Naive thymus-derived CD4-positive, alpha-beta T cell (primary cell): ENCODE measurements at regions of chr6 and their contacts with region 1.

Region 1: DNA sequence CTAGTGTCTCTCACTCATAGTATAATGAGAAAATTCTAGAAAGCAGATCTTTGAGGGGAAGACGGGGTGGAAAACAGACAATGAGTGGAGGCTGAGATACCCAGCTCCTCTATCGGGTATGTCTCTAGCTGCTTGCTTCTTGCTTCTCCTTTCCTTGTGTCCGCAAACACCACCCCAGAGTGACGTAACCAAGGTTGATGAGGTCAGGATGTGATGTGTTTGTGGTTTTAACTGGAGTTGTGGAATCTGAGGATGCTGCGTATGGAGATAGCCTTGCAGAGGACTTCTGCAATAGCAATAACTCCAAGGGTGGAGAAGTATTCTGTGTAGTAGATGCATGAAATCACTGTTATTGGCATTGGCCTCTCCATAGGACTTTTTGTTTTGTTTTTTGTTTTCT is 132.7 kb upstream of the IFNGR1 start:
- DNase-seq: no peak
- ATAC-seq: peak; percentile 87
- H3K4me3 ChIP-seq: no peak overlapping the region
- H3K4me3 Mint-ChIP-seq: no peak overlapping the region
- H3K27ac ChIP-seq: no peak overlapping the region
- H3K27ac Mint-ChIP-seq: peak overlapping the region in 2 of 9 donors; percentile 51 to 65
- H3K4me1 ChIP-seq: peaks cover 12 to 14% of the 10 kb centered on the region in 2 donors
- H3K4me1 Mint-ChIP-seq: peaks cover 6 to 21% (median 18%) of the 10 kb centered on the region in 7 donors
- H3K27me3 ChIP-seq: no peaks in the 10 kb centered on the region
- H3K27me3 Mint-ChIP-seq: peaks cover 0 to 16% (median 0%) of the 10 kb centered on the region in 5 donors

Region 2: GRCh38 chr6:137371634-137372016 is 19.7 kb after region 1 on chr6:
- CTCF ChIA-PET with region 1: interaction called, 3 read pairs
- POLR2A ChIA-PET with region 1: interaction called, 3 read pairs
- intact Hi-C with region 1: loop called in 1 of 2 experiments (anchors 2 kb)
- DNase-seq: no peak
- ATAC-seq: no peak
- H3K4me3 ChIP-seq: no peak overlapping the region
- H3K4me3 Mint-ChIP-seq: no peak overlapping the region
- H3K27ac ChIP-seq: no peak overlapping the region
- H3K27ac Mint-ChIP-seq: no peak overlapping the region
- H3K4me1 ChIP-seq: peaks cover 0 to 3% of the 10 kb centered on the region in 2 donors
- H3K4me1 Mint-ChIP-seq: peaks cover 5 to 20% (median 10%) of the 10 kb centered on the region in 7 donors
- H3K27me3 ChIP-seq: no peaks in the 10 kb centered on the region
- H3K27me3 Mint-ChIP-seq: peaks cover 0 to 4% (median 0%) of the 10 kb centered on the region in 5 donors

Region 3: DNA sequence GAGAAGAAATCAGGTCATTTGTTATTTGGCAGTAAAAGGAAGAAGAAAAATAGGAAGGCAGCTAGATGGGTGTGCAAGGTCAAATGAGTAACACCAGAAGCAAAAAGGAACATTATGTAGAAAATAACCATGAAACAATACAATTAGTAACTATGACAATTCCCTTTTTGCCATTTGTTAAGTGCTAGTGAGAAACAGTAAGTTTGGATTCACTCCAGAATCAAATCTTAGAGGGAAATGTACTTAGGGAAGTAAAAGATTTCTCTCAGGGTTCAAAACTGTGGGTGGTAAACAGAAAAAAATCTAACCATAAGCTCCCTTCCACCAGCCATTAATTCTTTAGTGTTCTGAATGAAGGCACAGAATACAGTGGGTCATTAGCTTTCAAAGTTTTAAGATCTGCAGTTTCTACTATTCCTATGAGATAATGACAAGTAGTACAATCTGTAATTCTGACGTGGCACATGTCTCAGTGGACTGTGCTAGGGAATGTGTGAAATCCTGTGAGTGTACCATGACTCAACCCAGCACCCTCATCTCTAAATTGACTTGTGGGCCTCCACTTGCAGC is 1619.1 kb after region 1 on chr6:
- CTCF ChIA-PET with region 1: no interaction called
- POLR2A ChIA-PET with region 1: no interaction called
- intact Hi-C with region 1: no loop called
- DNase-seq: no peak
- ATAC-seq: peak; percentile 81
- H3K4me3 ChIP-seq: no peak overlapping the region
- H3K4me3 Mint-ChIP-seq: peak overlapping the region in 5 of 10 donors; percentile 7 to 53 (median 15)
- H3K27ac ChIP-seq: no peak overlapping the region
- H3K27ac Mint-ChIP-seq: peak overlapping the region in 3 of 9 donors; percentile 15 to 50 (median 26)
- H3K4me1 ChIP-seq: peaks cover 30 to 32% of the 10 kb centered on the region in 2 donors
- H3K4me1 Mint-ChIP-seq: peaks cover 28 to 97% (median 84%) of the 10 kb centered on the region in 7 donors
- H3K27me3 ChIP-seq: no peaks in the 10 kb centered on the region
- H3K27me3 Mint-ChIP-seq: no peaks in the 10 kb centered on the region